Activated CD4-positive, alpha-beta T cell treated with anti-CD3 and anti-CD28 coated beads, Interleukin-2, amount 10 ng/mL, durations not matched to agents 7 days and 5 days (primary cell): ENCODE measurements at regions of chr1 and their contacts with region 1.

Region 1: DNA sequence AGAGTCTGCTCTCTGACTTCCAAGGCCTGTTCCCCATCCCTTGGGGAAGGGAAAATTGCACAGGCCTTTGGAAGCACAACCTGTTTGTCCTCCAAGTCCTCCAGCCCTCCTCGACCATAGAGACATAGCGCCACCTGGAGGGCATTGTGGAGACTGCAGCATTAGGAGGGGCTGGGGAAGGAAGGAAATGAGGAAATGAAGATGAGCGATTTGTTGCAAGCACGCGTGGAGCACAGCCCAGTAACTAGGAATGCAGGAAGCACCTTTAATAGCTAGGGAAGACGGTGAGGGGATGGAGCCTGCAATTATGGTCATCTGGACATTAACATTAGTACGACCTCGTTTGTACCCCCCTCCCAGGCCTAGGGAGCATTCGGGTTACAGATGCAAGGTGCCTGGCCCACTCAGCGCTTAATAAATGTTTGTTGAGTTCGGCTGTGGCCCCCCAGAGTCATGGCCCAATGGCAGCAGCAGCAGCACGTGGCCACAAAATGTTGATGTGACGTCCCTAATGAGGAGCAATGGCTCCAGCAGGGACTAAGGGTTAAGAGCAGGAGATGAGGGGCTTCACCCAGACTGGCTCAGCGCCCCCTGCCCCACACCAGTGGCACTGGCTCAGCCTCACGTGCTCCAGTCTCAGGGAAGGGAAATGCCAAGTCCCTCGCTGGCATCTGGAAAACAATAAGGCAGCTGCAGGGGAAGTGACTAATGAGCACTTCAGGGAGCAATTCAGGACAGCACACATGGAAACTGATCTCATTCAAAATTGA is 8.0 kb upstream of the CAMK2N1 start:
- DNase-seq: peak; percentile 85
- H3K4me3 Mint-ChIP-seq: no peak overlapping the region
- H3K27ac Mint-ChIP-seq: no peak overlapping the region
- H3K4me1 Mint-ChIP-seq: peaks cover 11% of the 10 kb centered on the region
- H3K27me3 Mint-ChIP-seq: peaks cover 9% of the 10 kb centered on the region

Region 2: GRCh38 chr1:20376880-20377494 is 117.0 kb before region 1 on chr1:
- CTCF ChIA-PET with region 1: no interaction called
- POLR2A ChIA-PET with region 1: no interaction called
- DNase-seq: peak; percentile 45
- H3K4me3 Mint-ChIP-seq: no peak overlapping the region
- H3K27ac Mint-ChIP-seq: no peak overlapping the region
- H3K4me1 Mint-ChIP-seq: no peaks in the 10 kb centered on the region
- H3K27me3 Mint-ChIP-seq: peaks cover 18% of the 10 kb centered on the region

Region 3: GRCh38 chr1:20507564-20508410 is 13.8 kb after region 1 on chr1 and contains the start of gene MUL1:
- CTCF ChIA-PET with region 1: interaction called, 11 read pairs
- POLR2A ChIA-PET with region 1: no interaction called
- DNase-seq: peak; percentile 96
- H3K4me3 Mint-ChIP-seq: peak within 1 kb of the TSS; percentile 88
- H3K27ac Mint-ChIP-seq: peak within 1 kb of the TSS; percentile 93
- H3K4me1 Mint-ChIP-seq: peaks cover 19% of the 10 kb centered on the region
- H3K27me3 Mint-ChIP-seq: no peaks in the 10 kb centered on the region
- total RNA-seq, gene MUL1: 17.4 to 20.1 TPM